ENCODE measurements at regions of chr6 and their contacts with region 1.

Region 1: GRCh38 chr6:92710048-92710447 is 709.3 kb downstream of the EPHA7 start:
- DNase-seq: no peak
- H3K4me3 ChIP-seq: no peak overlapping the region
- H3K27ac ChIP-seq: no peak overlapping the region
- H3K4me1 ChIP-seq: no peaks in the 10 kb centered on the region
- H3K27me3 ChIP-seq: no peaks in the 10 kb centered on the region
- CTCF ChIP-seq: no peak
- POLR2A ChIP-seq: no peak

Region 2: DNA sequence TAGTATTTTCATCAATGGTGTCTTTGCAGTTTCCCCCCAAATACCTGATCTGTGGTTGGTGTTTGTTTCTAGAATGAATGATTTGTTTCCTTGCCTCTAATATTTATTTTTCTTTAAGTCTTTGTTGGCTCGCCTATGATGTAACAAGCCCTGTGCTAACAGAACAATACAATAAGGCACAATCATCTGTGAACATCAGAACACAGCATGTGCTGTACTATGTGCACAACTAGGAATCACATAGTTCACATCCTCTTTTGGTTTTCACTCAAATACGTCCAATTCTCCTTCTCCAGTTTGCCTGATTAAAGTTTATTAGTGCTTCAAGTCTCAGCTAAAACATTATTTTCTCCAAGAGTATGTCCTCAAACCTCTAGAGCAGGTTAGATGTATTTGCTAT is 96.2 kb after region 1 on chr6:
- intact Hi-C with region 1: loop called (anchors 5 kb)
- DNase-seq: no peak
- H3K4me3 ChIP-seq: no peak overlapping the region
- H3K27ac ChIP-seq: no peak overlapping the region
- H3K4me1 ChIP-seq: no peaks in the 10 kb centered on the region
- H3K27me3 ChIP-seq: no peaks in the 10 kb centered on the region
- CTCF ChIP-seq: no peak
- POLR2A ChIP-seq: no peak

Region 3: GRCh38 chr6:94027374-94027773 is 1317.3 kb after region 1 on chr6:
- intact Hi-C with region 1: no loop called
- DNase-seq: no peak
- H3K4me3 ChIP-seq: no peak overlapping the region
- H3K27ac ChIP-seq: no peak overlapping the region
- H3K4me1 ChIP-seq: no peaks in the 10 kb centered on the region
- H3K27me3 ChIP-seq: no peaks in the 10 kb centered on the region
- CTCF ChIP-seq: no peak
- POLR2A ChIP-seq: no peak